ENCODE measurements at regions of chr10 and their contacts with region 1.

Region 1: DNA sequence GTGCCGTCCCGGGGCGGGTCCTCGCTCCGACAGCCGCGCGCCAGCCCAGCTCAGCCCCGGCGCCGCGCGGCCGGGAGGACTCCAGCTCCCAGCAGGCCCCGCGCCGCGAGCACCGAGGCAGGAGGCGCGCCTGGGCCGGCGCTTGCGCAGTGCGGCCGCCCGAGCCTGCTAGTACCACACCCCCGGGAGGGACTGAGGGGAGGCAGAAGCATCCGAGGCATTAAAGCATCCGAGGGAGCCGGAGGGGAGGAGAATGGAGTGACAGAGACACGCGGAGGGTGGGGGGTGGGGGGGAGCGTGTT is at the start of gene GRK5:
- DNase-seq: peak; percentile 93
- ATAC-seq: peak; percentile 86
- H3K4me3 ChIP-seq: peak within 1 kb of the TSS; percentile 48 to 69
- H3K27ac ChIP-seq: peak within 1 kb of the TSS; percentile 84
- H3K4me1 ChIP-seq: peaks cover 20 to 36% of the 10 kb centered on the region in 2 experiments; a peak in 3 of 4 replicates
- H3K27me3 ChIP-seq: no peaks in the 10 kb centered on the region
- CTCF ChIP-seq: no peak
- POLR2A ChIP-seq: peak; percentile 36
- RAD21 ChIP-seq: no peak
- total RNA-seq, gene GRK5: 7.3 TPM

Region 2: DNA sequence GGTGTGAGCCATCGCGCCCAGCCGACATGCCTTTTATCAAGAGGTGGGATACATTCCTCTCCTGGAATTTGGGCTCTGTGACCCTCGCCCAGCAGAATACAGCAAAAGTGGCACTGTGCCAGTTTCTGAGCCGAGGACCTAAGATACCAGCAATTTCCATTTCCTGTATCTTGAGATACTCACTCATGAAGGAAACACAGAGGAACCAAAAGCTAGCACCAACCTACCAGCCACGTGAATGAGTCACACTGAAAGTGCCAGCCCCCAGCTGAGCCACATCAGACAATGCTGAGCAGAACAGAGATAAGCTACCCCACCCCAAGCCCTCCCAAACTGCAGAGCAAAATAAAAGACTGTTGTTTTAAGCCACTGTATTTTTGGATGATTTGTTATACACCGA is 508.9 kb before region 1 on chr10:
- CTCF ChIA-PET with region 1: no interaction called
- POLR2A ChIA-PET with region 1: no interaction called
- RAD21 ChIA-PET with region 1: no interaction called
- intact Hi-C with region 1: no loop called
- DNase-seq: peak; percentile 93
- ATAC-seq: peak; percentile 99
- H3K4me3 ChIP-seq: peak overlapping the region in 1 of 2 experiments; percentile 29; a peak in 2 of 4 replicates
- H3K27ac ChIP-seq: peak overlapping the region; percentile 42
- H3K4me1 ChIP-seq: peaks cover 18 to 23% of the 10 kb centered on the region in 2 experiments
- H3K27me3 ChIP-seq: no peaks in the 10 kb centered on the region
- CTCF ChIP-seq: no peak
- POLR2A ChIP-seq: no peak
- RAD21 ChIP-seq: no peak

Region 3: DNA sequence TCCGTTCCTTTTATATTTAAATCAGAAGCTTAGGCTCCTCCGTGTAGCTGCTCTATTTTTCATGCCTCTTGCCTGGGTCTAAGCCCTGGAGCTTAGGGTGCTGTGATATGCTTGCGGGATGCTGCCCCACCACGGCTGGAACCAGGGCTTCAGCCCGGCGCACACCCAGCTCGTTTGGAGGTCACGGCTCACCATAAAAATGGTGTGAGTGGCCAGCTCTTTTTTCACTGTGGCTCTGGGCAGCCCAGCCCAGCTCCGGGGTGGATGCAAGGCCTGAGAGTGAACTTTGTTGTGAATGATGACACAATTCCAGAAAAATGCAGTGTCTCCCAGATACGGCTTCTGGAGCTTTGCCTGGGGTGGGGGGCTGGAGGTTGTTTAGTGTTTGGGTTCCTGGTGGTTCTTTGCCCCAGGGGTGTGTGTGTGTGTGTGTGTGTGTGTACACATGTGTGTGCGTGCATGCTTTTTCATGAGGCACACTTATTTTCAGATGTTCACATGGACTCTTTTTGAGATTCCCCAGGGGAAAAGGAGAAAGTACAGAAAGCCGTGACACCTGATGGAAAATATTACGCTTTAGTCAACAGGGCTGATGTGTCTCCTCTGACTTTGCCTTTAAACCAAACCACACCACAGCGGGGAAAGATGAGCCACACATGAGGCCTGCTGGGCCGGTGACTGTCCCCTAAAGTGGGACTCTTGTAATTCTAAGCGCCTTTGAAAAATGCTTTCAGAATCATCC is 46.3 kb after region 1 on chr10:
- CTCF ChIA-PET with region 1: interaction called, 6 read pairs
- POLR2A ChIA-PET with region 1: interaction called, 4 read pairs
- RAD21 ChIA-PET with region 1: interaction called in 1 of 2 experiments, 3 read pairs
- intact Hi-C with region 1: loop called (anchors 2 kb)
- DNase-seq: peak; percentile 97
- ATAC-seq: peak; percentile 85
- H3K4me3 ChIP-seq: peak overlapping the region; percentile 20 to 43
- H3K27ac ChIP-seq: peak overlapping the region; percentile 93
- H3K4me1 ChIP-seq: peaks cover 40 to 68% of the 10 kb centered on the region in 2 experiments
- H3K27me3 ChIP-seq: no peaks in the 10 kb centered on the region
- CTCF ChIP-seq: 0 out of 6 replicates have a peak, but pooled peaks of 1 of the 3 experiments have one; percentile 4
- POLR2A ChIP-seq: no peak
- RAD21 ChIP-seq: no peak

Region 4: DNA sequence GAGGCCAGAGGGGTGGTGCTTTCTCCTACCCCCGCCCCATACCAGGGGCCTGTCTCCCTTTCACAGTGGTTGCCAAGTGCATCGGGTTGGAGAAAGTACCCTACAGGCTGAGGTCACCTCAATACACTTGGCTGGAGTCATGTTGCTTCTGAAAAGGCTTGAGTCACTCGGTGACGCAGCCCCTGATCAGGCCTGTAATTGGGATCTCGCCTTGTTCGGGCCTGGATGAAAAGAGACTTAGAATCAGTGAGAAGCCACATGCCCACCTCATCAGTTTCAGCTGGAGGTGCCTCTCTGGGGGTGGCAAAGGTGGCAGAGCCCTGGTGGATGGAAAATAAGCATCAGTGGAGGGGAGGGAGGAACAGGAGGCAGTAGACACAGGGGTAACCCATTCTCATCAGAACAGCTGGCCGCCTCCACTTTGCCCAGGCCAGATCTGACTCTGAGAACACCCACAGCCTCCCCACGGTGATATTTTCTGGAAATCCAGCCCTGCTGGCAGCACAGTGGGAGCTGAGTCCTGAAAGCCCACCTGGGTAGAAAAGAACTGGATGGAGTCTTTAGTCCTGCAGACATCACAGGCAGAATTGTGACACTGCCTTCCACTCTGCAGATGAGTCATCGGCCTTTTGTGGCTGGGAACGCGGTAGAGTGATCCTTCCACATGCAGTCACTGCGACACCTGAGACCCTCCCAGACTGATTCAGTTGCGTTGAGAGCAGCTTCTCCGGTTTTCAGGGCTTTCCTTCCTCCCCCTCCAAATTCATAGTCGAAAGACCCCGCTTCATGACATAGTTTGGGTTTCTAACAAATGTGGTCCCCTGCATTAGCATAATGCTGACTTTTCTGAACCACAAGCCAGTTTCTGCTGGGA is 108.0 kb after region 1 on chr10:
- CTCF ChIA-PET with region 1: interaction called, 3 read pairs
- POLR2A ChIA-PET with region 1: interaction called, 3 read pairs
- RAD21 ChIA-PET with region 1: interaction called in 1 of 2 experiments, 8 read pairs
- intact Hi-C with region 1: loop called (anchors 5 kb)
- DNase-seq: peak; percentile 91
- ATAC-seq: peak; percentile 72
- H3K4me3 ChIP-seq: peak overlapping the region; percentile 13 to 38
- H3K27ac ChIP-seq: peak overlapping the region; percentile 98
- H3K4me1 ChIP-seq: peaks cover 60 to 74% of the 10 kb centered on the region in 2 experiments
- H3K27me3 ChIP-seq: no peaks in the 10 kb centered on the region
- CTCF ChIP-seq: no peak
- POLR2A ChIP-seq: no peak
- RAD21 ChIP-seq: no peak

Region 5: DNA sequence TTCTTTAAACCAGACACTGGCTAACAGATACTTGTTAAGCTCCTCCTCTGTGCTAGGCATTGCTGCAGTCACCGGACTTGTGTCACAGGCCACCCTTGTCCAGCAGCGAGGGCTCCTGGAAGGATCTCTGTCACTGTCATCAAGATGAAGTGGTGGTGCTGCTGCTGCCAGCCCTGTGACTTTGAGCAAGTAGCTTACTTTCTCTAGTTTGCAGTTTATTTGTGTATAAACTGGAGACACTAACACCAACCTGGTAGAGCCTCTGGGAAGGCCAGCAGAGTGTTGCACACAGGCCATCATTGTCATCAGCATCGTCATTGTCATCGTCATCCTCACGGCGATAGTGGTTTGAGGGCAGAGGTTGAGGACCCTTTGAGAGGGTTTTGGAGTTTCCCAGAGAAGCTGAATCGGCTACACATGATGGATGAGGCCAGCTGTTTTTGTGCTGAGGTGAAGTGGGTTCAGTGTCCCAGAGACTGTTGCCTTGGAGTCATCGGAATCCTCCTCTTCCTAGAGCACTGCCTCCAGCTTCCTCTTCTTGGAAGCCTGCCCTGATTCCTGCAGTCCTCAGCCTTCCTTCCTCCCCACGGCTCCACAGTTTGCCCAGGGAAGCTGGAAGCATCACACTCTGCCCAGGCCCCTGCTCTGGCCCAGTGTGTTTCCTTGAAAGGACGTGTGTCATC is 128.5 kb after region 1 on chr10:
- CTCF ChIA-PET with region 1: no interaction called
- POLR2A ChIA-PET with region 1: no interaction called
- RAD21 ChIA-PET with region 1: no interaction called
- intact Hi-C with region 1: no loop called
- DNase-seq: no peak
- ATAC-seq: no peak
- H3K4me3 ChIP-seq: no peak overlapping the region
- H3K27ac ChIP-seq: no peak overlapping the region
- H3K4me1 ChIP-seq: peaks cover 4 to 22% of the 10 kb centered on the region in 2 experiments; a peak in 3 of 4 replicates
- H3K27me3 ChIP-seq: no peaks in the 10 kb centered on the region
- CTCF ChIP-seq: no peak
- POLR2A ChIP-seq: no peak
- RAD21 ChIP-seq: no peak

Region 6: GRCh38 chr10:119348106-119348505 is 140.8 kb after region 1 on chr10:
- CTCF ChIA-PET with region 1: no interaction called
- POLR2A ChIA-PET with region 1: no interaction called
- RAD21 ChIA-PET with region 1: no interaction called
- intact Hi-C with region 1: no loop called
- DNase-seq: no peak
- ATAC-seq: no peak
- H3K4me3 ChIP-seq: no peak overlapping the region
- H3K27ac ChIP-seq: no peak overlapping the region
- H3K4me1 ChIP-seq: no peaks in the 10 kb centered on the region
- H3K27me3 ChIP-seq: no peaks in the 10 kb centered on the region
- CTCF ChIP-seq: no peak
- POLR2A ChIP-seq: no peak
- RAD21 ChIP-seq: no peak

Region 7: GRCh38 chr10:119445311-119445934 is 238.1 kb after region 1 on chr10:
- CTCF ChIA-PET with region 1: interaction called, 37 read pairs
- POLR2A ChIA-PET with region 1: no interaction called
- RAD21 ChIA-PET with region 1: interaction called, 3 to 7 read pairs
- intact Hi-C with region 1: no loop called
- DNase-seq: peak; percentile 70
- ATAC-seq: peak; percentile 88
- H3K4me3 ChIP-seq: no peak overlapping the region
- H3K27ac ChIP-seq: no peak overlapping the region
- H3K4me1 ChIP-seq: peaks cover 7 to 12% of the 10 kb centered on the region in 2 experiments
- H3K27me3 ChIP-seq: no peaks in the 10 kb centered on the region
- CTCF ChIP-seq: peak; percentile 94 to 100 (median 99)
- POLR2A ChIP-seq: no peak
- RAD21 ChIP-seq: peak; percentile 96

Region 8: DNA sequence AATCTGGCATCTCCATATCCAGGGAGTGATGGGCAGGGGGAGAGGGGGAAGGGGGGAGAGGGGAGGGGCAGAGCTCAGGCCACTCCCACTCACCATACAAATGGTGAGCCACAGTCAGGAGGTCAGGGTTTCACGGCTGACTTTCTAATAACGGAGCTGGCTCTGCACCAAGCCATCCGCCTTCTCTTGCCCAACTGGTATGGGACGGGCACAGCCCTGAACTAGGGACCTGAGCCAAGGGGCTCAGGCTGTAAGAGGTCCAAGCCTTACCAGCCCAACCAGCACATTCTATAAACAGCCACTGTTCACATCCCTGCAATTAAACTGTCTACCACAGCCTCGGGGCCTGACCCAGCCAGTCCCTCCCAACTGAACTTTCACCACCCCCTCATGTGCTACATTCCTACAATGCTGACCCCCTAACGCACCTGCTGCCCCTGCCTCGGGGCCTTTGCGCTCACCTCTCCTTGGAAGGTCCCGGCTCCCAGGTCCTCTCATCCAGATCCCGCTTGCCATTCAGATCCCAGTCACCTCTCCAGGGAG is 302.7 kb after region 1 on chr10:
- CTCF ChIA-PET with region 1: no interaction called
- POLR2A ChIA-PET with region 1: no interaction called
- RAD21 ChIA-PET with region 1: no interaction called
- intact Hi-C with region 1: no loop called
- DNase-seq: no peak
- ATAC-seq: peak; percentile 26; the same call in 1 of the 2 replicates
- H3K4me3 ChIP-seq: no peak overlapping the region
- H3K27ac ChIP-seq: no peak overlapping the region
- H3K4me1 ChIP-seq: no peaks in the 10 kb centered on the region
- H3K27me3 ChIP-seq: no peaks in the 10 kb centered on the region
- CTCF ChIP-seq: no peak
- POLR2A ChIP-seq: no peak
- RAD21 ChIP-seq: no peak

Region 9: DNA sequence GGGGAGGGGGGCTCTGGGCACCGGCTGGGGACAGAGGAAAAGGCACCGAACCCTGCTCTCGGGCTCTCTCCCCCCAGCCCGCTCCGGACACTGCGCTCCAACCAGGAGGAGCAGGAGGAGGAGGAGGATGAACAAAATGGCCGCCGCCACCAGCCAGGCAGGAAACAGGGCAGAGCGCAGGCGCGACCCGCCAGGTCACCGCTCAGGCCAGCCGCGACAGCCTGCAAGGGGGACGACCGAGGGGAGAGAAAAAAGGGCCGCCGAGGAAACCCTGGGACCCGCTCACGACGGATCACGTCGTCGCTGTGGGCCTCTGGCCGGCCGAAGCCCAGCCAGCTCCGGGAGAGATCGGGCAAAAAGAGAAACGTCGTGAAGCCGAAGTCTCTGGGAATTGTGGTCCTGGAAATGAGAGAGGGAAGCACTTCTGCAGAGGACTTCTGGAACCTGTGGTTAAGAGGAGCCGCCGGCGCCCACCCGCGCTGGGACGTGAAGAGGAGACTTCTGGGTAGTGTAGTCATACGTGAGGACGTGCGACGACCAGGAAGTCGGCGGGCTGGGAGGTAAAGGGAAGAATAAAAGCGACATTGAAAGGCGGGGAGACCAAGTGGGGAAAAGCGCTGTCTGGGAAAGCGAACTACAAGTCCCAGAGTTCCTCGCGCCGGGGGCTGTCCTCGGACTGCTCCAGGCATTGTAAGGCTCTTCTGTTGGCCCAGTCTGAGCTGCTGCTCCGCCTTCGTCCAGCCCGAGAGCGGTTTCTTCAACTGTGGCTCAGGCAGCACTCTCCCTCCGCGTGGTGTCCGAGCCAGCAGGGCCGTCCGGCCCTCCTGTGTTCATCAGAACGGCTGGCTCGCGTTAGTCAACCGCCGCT is 389.5 kb after region 1 on chr10 and contains the start of gene TIAL1:
- CTCF ChIA-PET with region 1: no interaction called
- POLR2A ChIA-PET with region 1: interaction called, 3 read pairs
- RAD21 ChIA-PET with region 1: no interaction called
- intact Hi-C with region 1: loop called (anchors 5 kb)
- DNase-seq: peak; percentile 100
- ATAC-seq: peak; percentile 88
- H3K4me3 ChIP-seq: peak within 1 kb of the TSS; percentile 85 to 88
- H3K27ac ChIP-seq: peak within 1 kb of the TSS; percentile 97
- H3K4me1 ChIP-seq: peaks cover 13 to 23% of the 10 kb centered on the region in 2 experiments
- H3K27me3 ChIP-seq: no peaks in the 10 kb centered on the region
- CTCF ChIP-seq: no peak
- POLR2A ChIP-seq: peak; percentile 97
- RAD21 ChIP-seq: no peak
- total RNA-seq, gene TIAL1: 220 TPM